ENCODE measurements at regions of chr6 and their contacts with region 1.

Region 1: DNA sequence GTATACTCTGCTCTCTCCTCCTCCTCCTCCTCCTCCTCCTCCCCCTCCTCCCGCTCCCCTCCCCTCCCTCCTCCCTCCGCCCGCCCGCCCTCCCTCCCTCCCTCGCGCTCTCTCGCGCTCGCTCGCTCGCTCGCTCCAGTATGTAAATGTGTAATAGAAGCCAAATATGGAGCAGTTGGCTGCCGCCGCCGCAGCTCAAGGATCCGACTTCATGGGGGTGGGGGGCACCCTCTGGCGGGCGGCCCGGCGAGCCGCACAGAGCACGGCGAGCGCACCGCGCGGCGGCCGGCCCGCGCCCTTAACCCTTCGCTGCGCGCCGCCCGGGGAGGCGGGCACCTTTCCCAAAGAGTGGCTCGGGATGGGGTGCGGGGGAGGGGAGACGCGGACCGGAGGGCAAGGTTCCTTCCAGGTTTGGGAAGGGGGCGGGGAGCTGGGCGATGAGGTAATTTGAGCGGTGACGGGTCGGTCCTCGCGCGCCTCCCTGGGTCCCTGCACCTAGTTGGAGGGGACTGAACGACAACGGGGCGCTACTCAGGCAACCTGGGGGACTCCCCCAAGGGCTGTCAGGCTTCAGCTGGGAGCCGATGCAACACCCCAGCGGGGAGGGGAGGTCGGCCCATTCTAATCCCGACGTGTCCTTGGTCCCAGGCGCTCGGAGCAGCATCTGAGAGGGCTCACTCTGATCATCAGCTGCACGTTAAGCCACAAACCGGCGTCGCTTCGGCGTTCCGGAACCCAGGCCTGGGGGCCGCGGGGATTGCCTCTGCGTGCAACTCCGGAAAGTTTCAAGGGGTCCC is 409 bp upstream of the ATXN1 start:
- DNase-seq: peak; percentile 57 to 96 (median 76)

Region 2: GRCh38 chr6:16510245-16510644 is 251.4 kb before region 1 on chr6:
- intact Hi-C with region 1: loop called (anchors 1 kb)
- DNase-seq: no peak

Region 3: GRCh38 chr6:16635810-16636602 is 125.7 kb before region 1 on chr6:
- intact Hi-C with region 1: loop called (anchors 10 kb)
- DNase-seq: peak in 5 of 10 donors; percentile 8 to 85 (median 27)

Region 4: GRCh38 chr6:16684896-16685554 is 76.6 kb before region 1 on chr6:
- intact Hi-C with region 1: no loop called
- DNase-seq: no peak

Region 5: GRCh38 chr6:16964553-16965501 is 203.2 kb after region 1 on chr6:
- intact Hi-C with region 1: loop called (anchors 5 kb)
- DNase-seq: peak; percentile 61 to 97 (median 80)

Measured in posterior cingulate gyrus (tissue), 11 donors.